Naive thymus-derived CD4-positive, alpha-beta T cell (primary cell): ENCODE measurements at regions of chr6 and their contacts with region 1.

Region 1: GRCh38 chr6:170087941-170088581 is 202.8 kb downstream of the DLL1 start:
- DNase-seq: peak in 8 of 9 donors; percentile 19 to 51 (median 46)
- ATAC-seq: peak; percentile 71
- H3K4me3 ChIP-seq: peak overlapping the region; percentile 68
- H3K4me3 Mint-ChIP-seq: peak overlapping the region; percentile 87 to 99 (median 92)
- H3K27ac ChIP-seq: peak overlapping the region; percentile 68
- H3K27ac Mint-ChIP-seq: peak overlapping the region; percentile 90 to 98 (median 95)
- H3K4me1 ChIP-seq: peaks cover 23 to 26% of the 10 kb centered on the region in 2 donors
- H3K4me1 Mint-ChIP-seq: peaks cover 30 to 47% (median 37%) of the 10 kb centered on the region in 7 donors
- H3K27me3 ChIP-seq: no peaks in the 10 kb centered on the region
- H3K27me3 Mint-ChIP-seq: no peaks in the 10 kb centered on the region

Region 2: GRCh38 chr6:169445661-169446581 is 642.1 kb before region 1 on chr6:
- CTCF ChIA-PET with region 1: no interaction called
- POLR2A ChIA-PET with region 1: no interaction called
- intact Hi-C with region 1: no loop called
- DNase-seq: no peak
- ATAC-seq: peak; percentile 12
- H3K4me3 ChIP-seq: no peak overlapping the region
- H3K4me3 Mint-ChIP-seq: no peak overlapping the region
- H3K27ac ChIP-seq: no peak overlapping the region
- H3K27ac Mint-ChIP-seq: no peak overlapping the region
- H3K4me1 ChIP-seq: no peaks in the 10 kb centered on the region
- H3K4me1 Mint-ChIP-seq: no peaks in the 10 kb centered on the region
- H3K27me3 ChIP-seq: no peaks in the 10 kb centered on the region
- H3K27me3 Mint-ChIP-seq: peaks cover 2 to 14% (median 8%) of the 10 kb centered on the region in 5 donors

Region 3: DNA sequence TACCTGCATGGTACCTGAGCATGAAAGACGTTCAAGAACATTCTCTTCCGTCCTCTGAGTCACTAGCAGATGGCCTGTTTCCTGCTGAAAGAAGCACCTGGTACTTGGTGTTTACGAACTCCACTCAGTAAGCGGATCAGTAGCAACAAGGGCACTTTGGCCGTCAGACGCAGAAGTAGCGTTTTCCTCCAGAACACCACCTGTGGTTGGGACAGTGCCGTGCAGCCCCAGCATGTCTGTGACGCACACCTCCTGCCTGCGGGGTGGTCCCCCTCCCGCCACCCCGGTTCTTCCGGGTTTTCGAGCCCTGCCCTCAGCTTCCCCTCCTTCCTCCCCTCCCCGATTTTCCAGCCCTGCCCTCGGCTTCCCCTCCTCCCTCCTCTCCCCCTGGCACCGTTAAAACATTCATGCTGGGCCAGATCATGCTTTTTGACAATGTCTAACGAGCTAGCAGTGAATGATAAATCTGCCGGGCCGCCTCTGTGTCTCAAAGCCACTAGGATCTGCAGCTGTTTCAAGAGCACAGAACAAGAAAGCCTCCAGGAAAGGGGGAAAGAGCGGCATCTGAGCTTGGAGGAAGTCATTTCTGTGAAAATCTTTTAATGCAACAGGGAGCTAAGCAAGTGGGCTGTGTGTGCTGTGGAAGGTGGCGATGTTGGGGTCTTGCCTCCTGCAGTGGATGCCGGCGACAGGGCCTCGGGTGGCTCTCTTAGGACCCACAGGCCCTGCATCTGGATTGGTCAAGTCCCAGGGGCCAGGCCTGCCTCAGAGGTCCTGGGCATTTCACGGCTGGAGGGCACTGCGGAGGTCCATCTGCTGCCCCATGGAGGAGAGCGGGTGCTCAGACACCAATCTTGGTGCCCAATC is 128.7 kb before region 1 on chr6:
- CTCF ChIA-PET with region 1: no interaction called
- POLR2A ChIA-PET with region 1: interaction called, 3 read pairs
- intact Hi-C with region 1: loop called in 1 of 2 experiments (anchors 5 kb)
- DNase-seq: peak in 7 of 9 donors; percentile 28 to 83 (median 67)
- ATAC-seq: peak; percentile 83
- H3K4me3 ChIP-seq: no peak overlapping the region
- H3K4me3 Mint-ChIP-seq: peak overlapping the region in 9 of 10 donors; percentile 29 to 79 (median 67)
- H3K27ac ChIP-seq: peak overlapping the region; percentile 53
- H3K27ac Mint-ChIP-seq: peak overlapping the region in 8 of 9 donors; percentile 69 to 98 (median 87)
- H3K4me1 ChIP-seq: peaks cover 0 to 6% of the 10 kb centered on the region in 2 donors
- H3K4me1 Mint-ChIP-seq: peaks cover 0 to 31% (median 20%) of the 10 kb centered on the region in 7 donors
- H3K27me3 ChIP-seq: no peaks in the 10 kb centered on the region
- H3K27me3 Mint-ChIP-seq: peaks cover 0 to 22% (median 10%) of the 10 kb centered on the region in 5 donors

Region 4: GRCh38 chr6:170147832-170148708 is 60.0 kb after region 1 on chr6:
- CTCF ChIA-PET with region 1: no interaction called
- POLR2A ChIA-PET with region 1: interaction called, 7 read pairs
- intact Hi-C with region 1: loop called (anchors 2 to 10 kb)
- DNase-seq: peak in 6 of 9 donors; percentile 21 to 51 (median 40)
- ATAC-seq: peak; percentile 78
- H3K4me3 ChIP-seq: peak overlapping the region; percentile 54
- H3K4me3 Mint-ChIP-seq: peak overlapping the region; percentile 70 to 89 (median 82)
- H3K27ac ChIP-seq: peak overlapping the region; percentile 48
- H3K27ac Mint-ChIP-seq: peak overlapping the region; percentile 68 to 96 (median 89)
- H3K4me1 ChIP-seq: peaks cover 20 to 37% of the 10 kb centered on the region in 2 donors
- H3K4me1 Mint-ChIP-seq: peaks cover 31 to 70% (median 56%) of the 10 kb centered on the region in 7 donors
- H3K27me3 ChIP-seq: no peaks in the 10 kb centered on the region
- H3K27me3 Mint-ChIP-seq: peaks cover 0 to 26% (median 4%) of the 10 kb centered on the region in 5 donors

Region 5: DNA sequence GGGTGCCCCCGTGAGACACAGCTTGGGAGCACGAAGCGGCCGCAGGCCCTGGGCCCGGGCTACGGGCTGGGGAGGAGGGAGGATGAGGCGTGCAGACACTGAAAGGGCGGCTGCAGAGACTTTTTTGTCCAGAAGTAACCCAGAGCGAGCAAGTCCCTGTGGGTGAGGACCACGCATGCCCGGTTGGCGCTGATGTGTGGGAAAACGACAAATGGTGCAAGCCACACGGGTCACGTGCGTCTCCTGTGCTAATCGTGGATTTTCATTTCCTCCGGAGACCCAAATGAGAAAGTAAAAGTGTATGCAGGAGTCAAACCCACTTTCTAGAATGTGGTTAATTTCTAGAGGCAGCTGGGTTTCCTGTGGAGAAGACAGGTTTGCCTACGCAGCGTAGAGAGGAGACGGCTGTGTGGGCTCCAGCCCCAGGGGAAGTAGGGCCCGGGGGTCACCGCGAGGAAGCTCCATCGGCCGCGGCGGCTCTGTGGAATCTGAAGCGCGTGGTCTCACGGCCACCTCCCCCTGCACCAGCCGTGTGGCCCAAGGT is 183.8 kb after region 1 on chr6:
- CTCF ChIA-PET with region 1: interaction called, 4 read pairs
- POLR2A ChIA-PET with region 1: interaction called, 9 read pairs
- intact Hi-C with region 1: loop called (anchors 1 to 5 kb)
- DNase-seq: peak; percentile 52 to 86 (median 81)
- ATAC-seq: peak; percentile 90
- H3K4me3 ChIP-seq: peak overlapping the region; percentile 71
- H3K4me3 Mint-ChIP-seq: peak overlapping the region; percentile 79 to 93 (median 88)
- H3K27ac ChIP-seq: peak overlapping the region; percentile 75
- H3K27ac Mint-ChIP-seq: peak overlapping the region; percentile 77 to 98 (median 94)
- H3K4me1 ChIP-seq: peaks cover 14 to 21% of the 10 kb centered on the region in 2 donors
- H3K4me1 Mint-ChIP-seq: peaks cover 15 to 42% (median 28%) of the 10 kb centered on the region in 7 donors
- H3K27me3 ChIP-seq: no peaks in the 10 kb centered on the region
- H3K27me3 Mint-ChIP-seq: peaks cover 0 to 64% (median 0%) of the 10 kb centered on the region in 5 donors